ENCODE measurements at regions of chr2 and their contacts with region 1.

Region 1: DNA sequence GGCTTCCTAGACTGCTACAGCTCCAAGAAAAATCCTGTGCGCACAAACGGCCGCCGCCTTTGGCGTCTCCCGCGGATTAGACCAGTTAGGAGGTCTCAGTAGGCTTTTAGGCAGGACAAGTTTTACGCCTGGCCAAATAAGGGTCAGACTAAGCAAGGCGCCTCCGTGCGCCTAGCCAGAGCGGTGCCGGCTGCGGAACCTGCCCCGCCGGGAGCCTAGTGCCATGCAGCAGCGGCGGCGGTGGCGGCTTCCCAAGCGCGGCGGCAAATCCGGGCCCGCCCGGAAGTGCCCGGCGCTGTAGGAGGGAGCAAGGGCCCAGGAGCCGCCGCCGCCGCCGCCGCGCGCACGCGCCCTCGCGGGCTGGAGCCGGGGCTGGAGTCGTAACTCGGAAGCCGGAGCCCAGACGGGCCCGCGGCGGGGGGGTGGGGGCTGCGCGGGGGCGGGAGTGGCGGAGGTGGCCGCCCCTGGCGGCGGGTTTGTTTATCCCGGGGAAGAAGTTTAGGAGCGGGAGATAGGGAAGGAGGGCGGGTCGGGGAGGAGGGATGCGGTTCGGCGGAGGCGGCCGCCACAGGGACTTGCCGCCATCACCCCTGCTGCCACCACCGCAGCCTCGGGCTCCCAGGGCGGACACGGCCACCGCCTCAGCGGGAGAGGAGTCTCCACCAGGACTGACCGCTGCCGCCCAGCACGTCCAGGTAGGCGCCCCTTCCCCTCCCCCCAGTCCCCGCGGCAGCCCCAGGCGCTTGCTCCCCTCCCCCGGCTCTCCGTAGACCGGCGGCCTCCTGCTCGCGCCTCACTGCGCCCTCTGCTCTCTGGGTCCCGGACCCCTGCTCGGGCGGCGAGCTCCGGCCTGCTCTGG is at the start of gene SPOPL:
- DNase-seq: peak; percentile 89
- ATAC-seq: peak; percentile 79
- H3K4me3 ChIP-seq: peak within 1 kb of the TSS; percentile 83 to 99 (median 91)
- H3K4me3 Mint-ChIP-seq: peak within 1 kb of the TSS; percentile 99
- H3K27ac ChIP-seq: peak within 1 kb of the TSS; percentile 84 to 97
- H3K27ac Mint-ChIP-seq: peak within 1 kb of the TSS; percentile 95
- H3K4me1 ChIP-seq: peaks cover 33 to 38% of the 10 kb centered on the region in 2 donors
- H3K4me1 Mint-ChIP-seq: peaks cover 48% of the 10 kb centered on the region
- H3K27me3 ChIP-seq: no peaks in the 10 kb centered on the region
- H3K27me3 Mint-ChIP-seq: no peaks in the 10 kb centered on the region
- CTCF ChIP-seq: peak; percentile 47
- total RNA-seq, gene SPOPL: 50.5 and 53.6 TPM in 2 replicates

Region 2: DNA sequence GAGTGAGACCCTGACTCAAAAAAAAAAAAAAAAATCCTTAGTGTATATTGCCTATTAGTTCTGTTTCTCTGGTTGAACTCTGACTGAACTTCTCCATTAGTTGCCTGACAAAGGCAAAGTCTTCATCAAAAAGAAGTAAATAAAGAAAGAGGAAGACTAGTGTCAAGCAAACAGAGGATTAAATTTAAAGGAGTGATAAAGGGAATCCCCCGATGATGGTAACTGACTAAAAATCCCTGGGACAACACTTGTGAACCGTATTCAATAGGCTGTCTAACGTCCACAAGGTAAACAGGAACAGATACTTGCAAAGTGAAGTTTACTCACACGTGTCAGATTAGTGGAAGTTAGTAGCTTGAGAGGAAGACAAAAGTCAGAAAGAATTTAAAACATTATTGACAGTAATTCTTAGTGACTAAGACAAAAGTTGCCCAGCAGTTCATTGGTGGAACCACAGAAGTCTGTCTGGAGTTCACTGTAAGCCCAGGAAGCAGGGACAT is 26.3 kb before region 1 on chr2:
- CTCF ChIA-PET with region 1: interaction called, 4 read pairs
- POLR2A ChIA-PET with region 1: no interaction called
- intact Hi-C with region 1: loop called (anchors 2 kb)
- DNase-seq: peak; percentile 68
- ATAC-seq: peak; percentile 76
- H3K4me3 ChIP-seq: peak overlapping the region in 1 of 5 experiments; percentile 23
- H3K4me3 Mint-ChIP-seq: peak overlapping the region; percentile 6
- H3K27ac ChIP-seq: peak overlapping the region; percentile 21 to 62
- H3K27ac Mint-ChIP-seq: peak overlapping the region; percentile 47
- H3K4me1 ChIP-seq: peaks cover 23% of the 10 kb centered on the region in 2 donors
- H3K4me1 Mint-ChIP-seq: peaks cover 30% of the 10 kb centered on the region
- H3K27me3 ChIP-seq: no peaks in the 10 kb centered on the region
- H3K27me3 Mint-ChIP-seq: no peaks in the 10 kb centered on the region
- CTCF ChIP-seq: no peak

Region 3: GRCh38 chr2:138548796-138549195 is 47.1 kb after region 1 on chr2:
- CTCF ChIA-PET with region 1: no interaction called
- POLR2A ChIA-PET with region 1: no interaction called
- intact Hi-C with region 1: loop called (anchors 5 kb)
- DNase-seq: no peak
- ATAC-seq: no peak
- H3K4me3 ChIP-seq: no peak overlapping the region
- H3K4me3 Mint-ChIP-seq: no peak overlapping the region
- H3K27ac ChIP-seq: peak overlapping the region in 1 of 2 donors; percentile 9
- H3K27ac Mint-ChIP-seq: no peak overlapping the region
- H3K4me1 ChIP-seq: peaks cover 0 to 6% of the 10 kb centered on the region in 2 donors
- H3K4me1 Mint-ChIP-seq: peaks cover 34% of the 10 kb centered on the region
- H3K27me3 ChIP-seq: no peaks in the 10 kb centered on the region
- H3K27me3 Mint-ChIP-seq: no peaks in the 10 kb centered on the region
- CTCF ChIP-seq: no peak

Region 4: GRCh38 chr2:138564586-138565241 is 63.1 kb after region 1 on chr2:
- CTCF ChIA-PET with region 1: no interaction called
- POLR2A ChIA-PET with region 1: no interaction called
- intact Hi-C with region 1: loop called (anchors 5 kb)
- DNase-seq: no peak
- ATAC-seq: no peak
- H3K4me3 ChIP-seq: no peak overlapping the region
- H3K4me3 Mint-ChIP-seq: no peak overlapping the region
- H3K27ac ChIP-seq: no peak overlapping the region
- H3K27ac Mint-ChIP-seq: no peak overlapping the region
- H3K4me1 ChIP-seq: no peaks in the 10 kb centered on the region
- H3K4me1 Mint-ChIP-seq: no peaks in the 10 kb centered on the region
- H3K27me3 ChIP-seq: no peaks in the 10 kb centered on the region
- H3K27me3 Mint-ChIP-seq: no peaks in the 10 kb centered on the region
- CTCF ChIP-seq: no peak

Region 5: GRCh38 chr2:138581909-138582308 is 80.3 kb after region 1 on chr2:
- CTCF ChIA-PET with region 1: no interaction called
- POLR2A ChIA-PET with region 1: no interaction called
- intact Hi-C with region 1: no loop called
- DNase-seq: no peak
- ATAC-seq: no peak
- H3K4me3 ChIP-seq: no peak overlapping the region
- H3K4me3 Mint-ChIP-seq: no peak overlapping the region
- H3K27ac ChIP-seq: no peak overlapping the region
- H3K27ac Mint-ChIP-seq: no peak overlapping the region
- H3K4me1 ChIP-seq: no peaks in the 10 kb centered on the region
- H3K4me1 Mint-ChIP-seq: no peaks in the 10 kb centered on the region
- H3K27me3 ChIP-seq: no peaks in the 10 kb centered on the region
- H3K27me3 Mint-ChIP-seq: no peaks in the 10 kb centered on the region
- CTCF ChIP-seq: no peak

Measured in B cell (primary cell).